ENCODE measurements at regions of chr3 and their contacts with region 1.

Region 1: DNA sequence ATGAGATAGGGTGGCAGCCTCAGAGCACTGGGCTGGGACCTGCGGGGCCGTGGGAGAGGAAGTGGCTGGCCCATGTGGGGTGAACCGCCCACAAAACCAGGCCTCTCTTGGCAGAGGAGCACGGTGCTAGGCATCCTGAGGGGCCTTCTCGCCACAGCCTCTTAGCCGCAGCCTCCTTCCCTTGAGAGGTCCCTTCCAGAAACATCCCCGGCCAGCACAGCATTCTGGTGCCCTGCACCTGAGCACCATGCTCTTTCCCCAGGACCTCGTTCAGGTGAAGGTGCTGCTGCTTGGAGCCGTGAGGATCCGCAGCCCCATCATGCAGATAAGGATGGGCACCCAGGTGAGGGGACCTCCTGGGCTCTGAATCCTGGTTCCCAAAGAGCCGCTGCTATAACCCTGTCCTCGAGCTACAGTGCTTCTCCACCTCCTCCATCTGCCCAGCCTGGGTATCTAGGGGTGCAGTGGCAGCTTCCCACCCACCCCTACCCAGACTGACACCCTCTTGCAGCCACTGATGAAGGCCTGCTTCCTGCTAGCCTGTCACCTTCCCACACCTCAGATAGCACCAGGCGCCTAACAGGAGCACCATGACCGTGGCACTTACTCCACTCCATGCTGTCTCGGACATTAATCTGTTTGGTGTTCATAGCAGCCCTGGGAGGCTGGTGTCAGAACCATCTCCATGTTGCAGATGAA is 11.2 kb upstream of the TXNRD3 start:
- DNase-seq: no peak
- H3K4me3 ChIP-seq: no peak overlapping the region
- H3K27ac ChIP-seq: no peak overlapping the region
- H3K4me1 ChIP-seq: no peaks in the 10 kb centered on the region
- H3K27me3 ChIP-seq: peaks cover 0 to 25% of the 10 kb centered on the region in 2 donors
- CTCF ChIP-seq: no peak
- POLR2A ChIP-seq: no peak

Region 2: DNA sequence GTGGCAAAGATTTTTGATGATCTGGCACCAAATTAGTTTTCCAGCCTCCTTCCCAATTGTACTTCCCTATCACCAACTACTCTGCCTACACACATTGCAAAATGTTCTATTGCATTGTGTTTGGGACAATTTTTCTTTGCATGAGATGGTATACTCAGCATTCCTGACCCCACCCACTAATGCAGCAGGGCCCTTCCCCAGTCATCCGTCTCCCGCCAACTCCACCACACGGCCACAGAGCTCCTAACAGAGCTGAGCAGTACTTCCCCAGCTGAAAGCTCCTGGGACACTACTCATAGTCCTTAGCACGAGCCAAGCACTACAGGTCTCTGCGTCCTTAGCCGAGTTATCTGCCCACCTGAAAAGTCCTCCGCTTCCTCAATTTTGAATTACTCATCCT is 45.4 kb before region 1 on chr3:
- intact Hi-C with region 1: loop called (anchors 1 kb)
- DNase-seq: no peak
- H3K4me3 ChIP-seq: no peak overlapping the region
- H3K27ac ChIP-seq: no peak overlapping the region
- H3K4me1 ChIP-seq: no peaks in the 10 kb centered on the region
- H3K27me3 ChIP-seq: no peaks in the 10 kb centered on the region
- CTCF ChIP-seq: no peak
- POLR2A ChIP-seq: no peak

Region 3: DNA sequence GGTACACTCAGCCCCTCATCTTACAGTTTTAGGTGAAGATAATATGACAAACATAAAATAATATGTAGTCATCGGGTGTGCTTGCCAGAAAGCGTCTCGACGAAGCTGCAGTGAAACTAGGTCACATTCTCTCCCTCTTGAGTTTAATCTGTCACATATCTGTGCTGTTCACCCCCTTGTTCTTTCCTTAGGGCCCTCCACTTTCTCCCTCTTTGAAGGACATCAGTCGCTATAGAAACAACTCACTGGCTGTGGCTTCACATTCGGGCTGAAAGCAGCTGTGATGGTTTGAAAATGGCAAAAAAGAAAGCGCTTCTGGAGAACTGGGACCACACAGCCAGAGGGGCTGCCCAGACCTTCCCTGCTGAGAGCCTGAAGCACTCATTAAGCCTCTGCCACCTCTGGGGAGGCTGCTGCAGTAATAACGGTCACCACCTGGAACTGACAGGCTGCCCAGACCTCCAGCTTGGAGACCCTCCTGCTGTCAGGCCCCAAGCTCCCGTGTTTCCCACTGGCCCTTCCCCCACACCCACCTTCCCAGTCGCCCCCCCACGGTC is 1057.0 kb after region 1 on chr3:
- intact Hi-C with region 1: no loop called
- DNase-seq: no peak
- H3K4me3 ChIP-seq: no peak overlapping the region
- H3K27ac ChIP-seq: peak overlapping the region in 1 of 2 donors; percentile 44
- H3K4me1 ChIP-seq: no peaks in the 10 kb centered on the region
- H3K27me3 ChIP-seq: no peaks in the 10 kb centered on the region
- CTCF ChIP-seq: no peak
- POLR2A ChIP-seq: no peak

Measured in breast epithelium (tissue), 4 donors.